Activated CD8-positive, alpha-beta T cell treated with anti-CD3 and anti-CD28 coated beads for 36 hours (primary cell): ENCODE measurements at regions of chr6 and their contacts with region 1.

Region 1: GRCh38 chr6:90216072-90216977 is 80.3 kb downstream of the BACH2 start:
- DNase-seq: peak; percentile 70
- ATAC-seq: peak; percentile 48
- H3K4me3 Mint-ChIP-seq: peak overlapping the region; percentile 69
- H3K27ac Mint-ChIP-seq: no peak overlapping the region
- H3K4me1 Mint-ChIP-seq: peaks cover 28% of the 10 kb centered on the region
- H3K27me3 Mint-ChIP-seq: no peaks in the 10 kb centered on the region
- CTCF ChIP-seq: no peak

Region 2: GRCh38 chr6:90080876-90081481 is 135.3 kb before region 1 on chr6:
- CTCF ChIA-PET with region 1: interaction called, 5 read pairs
- POLR2A ChIA-PET with region 1: interaction called, 13 read pairs
- intact Hi-C with region 1: no loop called
- DNase-seq: peak; percentile 96
- ATAC-seq: peak; percentile 62
- H3K4me3 Mint-ChIP-seq: peak overlapping the region; percentile 96
- H3K27ac Mint-ChIP-seq: peak overlapping the region; percentile 99
- H3K4me1 Mint-ChIP-seq: peaks cover 72% of the 10 kb centered on the region
- H3K27me3 Mint-ChIP-seq: no peaks in the 10 kb centered on the region
- CTCF ChIP-seq: no peak

Region 3: GRCh38 chr6:90190752-90191395 is 25.5 kb before region 1 on chr6:
- CTCF ChIA-PET with region 1: interaction called, 4 read pairs
- POLR2A ChIA-PET with region 1: interaction called, 16 read pairs
- intact Hi-C with region 1: no loop called
- DNase-seq: peak; percentile 44
- ATAC-seq: peak; percentile 47
- H3K4me3 Mint-ChIP-seq: peak overlapping the region; percentile 56
- H3K27ac Mint-ChIP-seq: peak overlapping the region; percentile 86
- H3K4me1 Mint-ChIP-seq: peaks cover 87% of the 10 kb centered on the region
- H3K27me3 Mint-ChIP-seq: no peaks in the 10 kb centered on the region
- CTCF ChIP-seq: no peak

Region 4: DNA sequence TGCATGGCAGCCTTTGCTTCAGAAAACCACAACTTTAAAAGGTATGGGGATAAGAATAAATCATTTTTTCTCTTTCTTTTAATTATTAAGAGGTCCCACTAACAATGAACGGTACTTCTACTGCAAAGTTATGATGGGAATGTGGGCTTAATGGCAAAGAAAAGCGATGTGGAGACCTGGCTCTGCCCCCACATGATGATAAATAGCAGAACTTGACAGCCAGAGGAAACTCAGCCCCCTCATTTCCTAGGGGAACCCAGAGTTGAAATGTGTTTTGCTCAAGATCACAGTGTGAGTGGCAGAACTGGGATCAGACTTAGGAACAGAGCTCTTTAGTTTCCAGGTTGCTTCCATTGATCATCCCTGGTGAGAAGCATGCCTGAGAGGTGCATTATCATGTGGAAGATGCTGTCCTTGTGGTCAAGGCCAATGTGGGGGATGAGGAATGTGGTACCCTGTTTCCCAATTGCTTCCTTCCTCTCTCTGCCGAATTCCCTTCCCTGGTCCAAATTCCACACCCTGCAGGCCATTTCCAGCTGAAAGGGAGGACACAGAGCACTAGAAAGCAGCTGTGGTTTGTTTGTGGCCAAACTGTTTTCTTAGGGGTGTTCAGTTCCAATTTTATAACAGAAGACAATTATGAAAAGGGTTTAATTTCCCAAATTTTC is 14.4 kb after region 1 on chr6:
- CTCF ChIA-PET with region 1: interaction called, 4 read pairs
- POLR2A ChIA-PET with region 1: interaction called, 34 read pairs
- intact Hi-C with region 1: no loop called
- DNase-seq: peak; percentile 34
- ATAC-seq: no peak
- H3K4me3 Mint-ChIP-seq: peak overlapping the region; percentile 52
- H3K27ac Mint-ChIP-seq: peak overlapping the region; percentile 96
- H3K4me1 Mint-ChIP-seq: peaks cover 92% of the 10 kb centered on the region
- H3K27me3 Mint-ChIP-seq: no peaks in the 10 kb centered on the region
- CTCF ChIP-seq: no peak

Region 5: DNA sequence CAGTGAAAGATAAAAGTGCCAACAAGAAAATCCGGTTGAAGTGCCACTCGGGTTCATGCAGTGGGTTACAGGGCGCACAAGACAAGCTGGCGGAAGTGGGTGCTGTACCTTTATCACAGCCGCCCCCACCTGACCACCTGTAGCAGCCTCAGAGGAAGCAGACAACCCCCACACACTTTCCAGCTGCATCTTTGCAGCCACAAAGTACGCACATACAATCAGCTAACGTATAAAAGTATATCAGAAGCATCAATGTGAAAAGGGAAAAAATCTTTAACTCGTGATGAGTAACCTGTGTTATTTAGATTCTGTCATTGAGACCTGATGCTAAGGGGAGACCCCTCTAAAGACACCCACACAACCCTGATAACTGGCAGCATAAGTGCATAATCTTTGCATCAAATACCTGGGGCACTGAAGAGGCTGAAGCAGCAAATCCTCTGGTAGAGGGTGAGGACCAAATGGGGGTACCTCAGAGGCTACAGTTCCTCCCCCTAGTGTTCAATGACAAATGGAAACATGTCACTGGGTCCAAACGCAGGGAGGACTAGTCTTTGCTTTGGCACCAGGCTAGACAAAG is 58.2 kb after region 1 on chr6:
- CTCF ChIA-PET with region 1: interaction called, 7 read pairs
- POLR2A ChIA-PET with region 1: interaction called, 32 read pairs
- intact Hi-C with region 1: no loop called
- DNase-seq: peak; percentile 99
- ATAC-seq: peak; percentile 84
- H3K4me3 Mint-ChIP-seq: peak overlapping the region; percentile 47
- H3K27ac Mint-ChIP-seq: peak overlapping the region; percentile 96
- H3K4me1 Mint-ChIP-seq: peaks cover 87% of the 10 kb centered on the region
- H3K27me3 Mint-ChIP-seq: no peaks in the 10 kb centered on the region
- CTCF ChIP-seq: no peak